ENCODE measurements at regions of chr14 and their contacts with region 1.

Region 1: DNA sequence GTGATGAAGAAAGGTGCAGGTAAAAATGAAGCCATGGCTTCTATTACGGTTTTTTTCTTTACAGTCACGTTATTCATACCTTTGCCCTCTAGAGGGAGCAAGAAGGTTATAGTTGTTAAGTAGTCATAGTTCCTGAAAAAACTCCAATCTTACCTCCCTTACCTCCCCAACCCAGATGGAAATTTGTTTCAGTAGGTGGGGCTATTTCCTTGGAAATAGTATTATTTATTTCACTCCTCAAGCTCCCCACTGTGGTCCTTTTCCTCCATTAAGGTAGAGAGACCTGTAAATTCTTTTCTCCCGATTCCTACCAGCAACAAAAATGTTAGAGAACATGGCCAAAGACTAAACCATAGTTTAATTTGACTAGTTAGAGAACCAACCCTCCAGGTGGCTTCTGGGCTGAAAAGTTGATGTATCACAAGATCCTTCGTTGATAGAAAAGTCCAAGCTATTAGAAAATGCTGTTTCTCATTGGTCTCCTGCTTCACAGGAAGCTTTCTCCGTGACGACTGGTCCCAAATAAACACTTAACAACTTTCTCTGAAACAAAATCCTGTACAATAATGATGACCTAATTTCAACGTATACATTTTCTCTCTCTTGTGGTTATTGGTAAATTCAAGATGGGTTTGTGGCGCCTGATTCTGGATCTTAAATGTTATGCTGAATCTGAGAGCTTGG is 43.5 kb downstream of the TMX1 start:
- DNase-seq: peak; percentile 41
- CTCF ChIP-seq: peak; percentile 49

Region 2: GRCh38 chr14:50688875-50689274 is 594.7 kb before region 1 on chr14:
- CTCF ChIA-PET with region 1: no interaction called
- POLR2A ChIA-PET with region 1: no interaction called
- DNase-seq: no peak
- CTCF ChIP-seq: no peak

Region 3: DNA sequence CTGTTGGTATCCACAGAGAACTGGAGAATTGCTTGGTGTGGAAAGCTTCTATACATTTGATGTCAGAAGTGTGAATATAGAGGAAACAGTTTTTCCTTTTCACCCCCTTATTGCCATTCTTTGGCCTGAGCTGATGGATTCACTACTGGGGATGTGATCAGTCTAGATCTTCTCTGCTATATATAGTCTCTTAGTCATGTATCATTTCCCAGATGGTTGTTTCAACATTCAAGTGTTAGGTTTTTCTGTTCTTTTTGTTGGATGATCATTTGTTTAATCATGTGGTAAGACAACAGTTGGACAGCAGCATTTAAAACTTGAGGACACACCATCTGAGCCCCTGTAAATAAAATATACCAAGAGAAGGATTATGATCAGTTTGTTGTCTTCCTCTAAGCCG is 13.9 kb before region 1 on chr14:
- CTCF ChIA-PET with region 1: interaction called, 31 read pairs
- POLR2A ChIA-PET with region 1: no interaction called
- DNase-seq: no peak
- CTCF ChIP-seq: no peak

Region 4: DNA sequence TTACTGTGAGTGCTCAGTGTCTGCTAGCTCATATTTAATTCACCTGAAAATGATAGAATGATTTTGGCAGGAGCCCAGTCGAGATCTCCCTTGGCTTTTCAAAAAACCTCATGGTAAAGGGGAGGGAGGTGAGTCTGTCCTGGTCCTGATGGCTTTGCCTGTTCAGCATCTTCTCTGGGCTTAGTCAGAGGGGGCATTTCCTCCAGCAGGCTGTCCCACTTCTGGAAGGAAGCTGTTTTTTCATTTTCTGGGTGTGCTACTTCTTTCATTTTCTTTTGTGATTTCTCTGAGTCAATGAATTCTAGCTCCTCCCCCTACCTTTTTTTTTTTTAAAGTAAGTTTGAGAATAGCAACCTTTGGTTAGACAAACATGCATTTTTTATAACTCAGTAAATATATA is 15.4 kb after region 1 on chr14:
- CTCF ChIA-PET with region 1: interaction called, 23 read pairs
- POLR2A ChIA-PET with region 1: no interaction called
- DNase-seq: peak; percentile 17
- CTCF ChIP-seq: no peak

Region 5: DNA sequence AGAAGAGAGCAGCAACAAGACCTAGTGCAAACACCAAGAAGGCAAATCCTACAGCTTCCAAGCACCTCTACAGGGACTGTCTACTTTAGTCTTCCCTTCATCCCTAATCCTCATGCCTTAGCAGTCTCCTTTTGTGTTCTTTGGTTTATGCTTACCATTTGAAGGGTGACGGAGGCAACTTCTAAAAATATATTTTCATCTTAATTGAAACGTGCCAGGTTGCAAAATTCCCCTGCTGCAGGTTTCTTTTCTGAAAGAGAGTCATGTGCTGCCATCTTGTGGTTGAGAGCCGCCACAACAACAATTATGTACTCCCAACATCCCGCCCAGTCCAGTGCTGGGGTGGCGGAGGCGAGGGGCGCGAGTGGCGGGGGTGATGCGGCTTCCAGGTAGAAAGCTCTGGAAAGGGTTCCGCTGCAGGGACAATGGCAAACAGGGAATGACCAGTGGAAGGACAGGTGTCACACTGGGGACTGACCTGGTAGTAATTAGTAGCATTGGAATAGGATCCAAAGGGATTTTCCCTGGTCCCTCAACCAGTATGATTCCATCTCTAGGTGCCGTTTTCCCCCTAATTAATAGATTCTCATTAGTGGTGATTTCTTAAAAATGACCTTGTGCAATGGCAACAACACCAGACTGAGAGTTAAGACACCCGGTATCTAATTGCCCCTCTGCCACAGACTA is 496.6 kb after region 1 on chr14:
- CTCF ChIA-PET with region 1: interaction called, 99 read pairs
- POLR2A ChIA-PET with region 1: no interaction called
- DNase-seq: peak; percentile 73
- CTCF ChIP-seq: peak; percentile 67